MCF 10A (cell line): ENCODE measurements at regions of chr21 and their contacts with region 1.

Region 1: DNA sequence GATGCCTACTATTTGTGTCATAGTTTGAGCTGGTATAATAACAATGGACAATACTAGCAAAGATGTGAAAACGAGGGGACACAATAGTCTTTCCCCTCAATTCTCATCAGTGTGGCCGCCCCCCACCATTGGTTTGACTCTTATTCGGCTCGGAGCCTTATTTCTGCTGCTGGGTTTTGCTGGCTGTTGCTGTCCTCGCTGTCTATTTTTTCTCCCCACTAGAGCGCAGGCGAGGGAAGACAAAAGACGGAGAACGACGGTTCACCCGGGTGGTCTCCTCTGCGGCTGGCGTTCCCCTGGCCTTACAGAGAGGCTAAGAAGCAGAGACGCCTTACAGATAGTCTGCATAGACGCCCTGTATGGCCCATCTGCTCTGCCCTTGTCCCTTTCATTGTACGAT is 19.4 kb downstream of the CLIC6 start:
- DNase-seq: peak; percentile 65
- H3K4me3 Mint-ChIP-seq: peak overlapping the region; percentile 33
- H3K27ac Mint-ChIP-seq: no peak overlapping the region
- H3K4me1 Mint-ChIP-seq: peaks cover 11% of the 10 kb centered on the region
- H3K27me3 Mint-ChIP-seq: no peaks in the 10 kb centered on the region
- CTCF ChIP-seq: peak; percentile 67

Region 2: DNA sequence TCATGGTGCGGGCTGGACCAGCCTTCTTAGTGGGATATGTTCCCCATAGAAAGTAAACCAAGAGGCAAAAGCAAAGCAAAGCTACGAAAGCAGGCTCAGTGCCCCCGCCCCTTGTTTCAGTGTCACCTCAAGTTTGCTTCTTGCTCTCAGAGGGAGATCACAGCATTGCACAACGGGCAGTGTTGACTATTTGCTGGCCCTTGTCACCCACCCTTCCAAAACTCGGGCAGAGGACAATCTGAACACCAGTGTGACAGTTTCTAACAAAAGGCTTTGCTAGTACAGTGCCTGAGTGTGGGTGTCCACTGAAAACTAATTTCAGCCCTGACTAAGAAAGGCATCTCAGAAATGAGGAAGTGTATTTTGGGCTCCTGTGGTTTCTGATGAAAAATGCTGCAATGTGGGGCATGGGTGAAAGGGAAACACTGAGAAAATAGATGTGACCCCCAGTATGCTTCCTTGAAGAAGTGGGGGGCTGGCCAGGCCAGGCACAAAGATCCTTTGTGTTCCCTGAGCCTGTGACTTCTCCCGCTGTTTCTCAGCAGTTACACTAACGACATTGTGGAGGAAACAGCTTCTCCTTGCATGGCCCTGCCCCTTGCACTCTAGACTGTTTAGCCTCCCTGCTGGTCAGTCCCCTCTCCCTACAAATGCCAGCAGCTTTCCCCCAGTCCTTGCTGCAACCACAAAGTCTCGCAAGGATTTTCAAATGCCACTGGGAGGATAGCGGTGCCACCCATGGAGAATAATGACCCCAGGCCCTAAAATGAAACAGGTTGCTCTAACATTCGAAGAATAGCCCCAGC is 142.9 kb before region 1 on chr21:
- CTCF ChIA-PET with region 1: no interaction called
- POLR2A ChIA-PET with region 1: no interaction called
- intact Hi-C with region 1: no loop called
- DNase-seq: no peak
- H3K4me3 Mint-ChIP-seq: no peak overlapping the region
- H3K27ac Mint-ChIP-seq: peak overlapping the region; percentile 44
- H3K4me1 Mint-ChIP-seq: peaks cover 12% of the 10 kb centered on the region
- H3K27me3 Mint-ChIP-seq: no peaks in the 10 kb centered on the region
- CTCF ChIP-seq: no peak

Region 3: GRCh38 chr21:34675171-34675570 is 13.0 kb before region 1 on chr21:
- CTCF ChIA-PET with region 1: interaction called, 12 read pairs
- POLR2A ChIA-PET with region 1: interaction called, 9 read pairs
- intact Hi-C with region 1: no loop called
- DNase-seq: peak; percentile 51
- H3K4me3 Mint-ChIP-seq: peak overlapping the region; percentile 11
- H3K27ac Mint-ChIP-seq: peak overlapping the region; percentile 44
- H3K4me1 Mint-ChIP-seq: peaks cover 11% of the 10 kb centered on the region
- H3K27me3 Mint-ChIP-seq: peaks cover 12% of the 10 kb centered on the region
- CTCF ChIP-seq: no peak

Region 4: GRCh38 chr21:34722684-34723300 is 34.6 kb after region 1 on chr21:
- CTCF ChIA-PET with region 1: interaction called, 16 read pairs
- POLR2A ChIA-PET with region 1: no interaction called
- intact Hi-C with region 1: no loop called
- DNase-seq: peak; percentile 27
- H3K4me3 Mint-ChIP-seq: no peak overlapping the region
- H3K27ac Mint-ChIP-seq: no peak overlapping the region
- H3K4me1 Mint-ChIP-seq: peaks cover 9% of the 10 kb centered on the region
- H3K27me3 Mint-ChIP-seq: no peaks in the 10 kb centered on the region
- CTCF ChIP-seq: peak; percentile 68